PC-3 (cell line): ENCODE measurements at regions of chr10 and their contacts with region 1.

Region 1: DNA sequence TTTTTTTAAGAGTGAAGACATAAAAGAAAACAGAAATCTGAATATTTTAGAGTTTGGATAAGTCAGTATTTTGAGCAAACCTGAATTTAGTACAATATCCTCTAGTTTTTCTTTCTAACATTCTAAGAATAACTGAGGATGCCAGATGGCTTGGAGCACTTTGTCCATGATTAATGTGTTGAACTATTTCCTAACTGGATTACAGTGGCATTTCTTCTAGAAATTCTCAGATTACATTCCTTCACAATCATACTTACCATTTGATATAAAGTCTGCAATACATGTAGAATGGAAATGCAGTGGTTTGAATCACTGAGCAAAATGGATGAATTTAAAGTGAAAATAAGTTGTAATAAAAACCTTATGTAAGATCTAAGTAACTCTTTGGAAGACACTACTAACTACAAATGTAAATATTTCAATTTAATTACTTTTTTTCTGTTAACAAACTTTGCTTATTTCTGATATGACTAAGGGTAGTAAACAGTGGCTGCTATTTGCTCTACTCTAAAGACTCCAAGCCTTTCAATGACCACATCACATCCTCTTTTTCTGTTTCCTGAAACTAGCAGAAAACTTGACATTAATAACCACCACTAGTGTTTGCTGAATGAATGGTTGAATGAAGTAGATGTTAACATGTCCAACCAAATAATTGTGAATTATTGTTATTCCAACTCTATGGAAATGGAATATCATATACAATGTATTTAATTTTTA is 102.8 kb downstream of the PRKG1 start:
- DNase-seq: peak; percentile 72
- ATAC-seq: peak; percentile 95
- H3K4me3 ChIP-seq: no peak overlapping the region
- H3K27ac ChIP-seq: peak overlapping the region; percentile 9
- H3K4me1 ChIP-seq: peaks cover 14% of the 10 kb centered on the region
- H3K27me3 ChIP-seq: no peaks in the 10 kb centered on the region
- CTCF ChIP-seq: no peak

Region 2: DNA sequence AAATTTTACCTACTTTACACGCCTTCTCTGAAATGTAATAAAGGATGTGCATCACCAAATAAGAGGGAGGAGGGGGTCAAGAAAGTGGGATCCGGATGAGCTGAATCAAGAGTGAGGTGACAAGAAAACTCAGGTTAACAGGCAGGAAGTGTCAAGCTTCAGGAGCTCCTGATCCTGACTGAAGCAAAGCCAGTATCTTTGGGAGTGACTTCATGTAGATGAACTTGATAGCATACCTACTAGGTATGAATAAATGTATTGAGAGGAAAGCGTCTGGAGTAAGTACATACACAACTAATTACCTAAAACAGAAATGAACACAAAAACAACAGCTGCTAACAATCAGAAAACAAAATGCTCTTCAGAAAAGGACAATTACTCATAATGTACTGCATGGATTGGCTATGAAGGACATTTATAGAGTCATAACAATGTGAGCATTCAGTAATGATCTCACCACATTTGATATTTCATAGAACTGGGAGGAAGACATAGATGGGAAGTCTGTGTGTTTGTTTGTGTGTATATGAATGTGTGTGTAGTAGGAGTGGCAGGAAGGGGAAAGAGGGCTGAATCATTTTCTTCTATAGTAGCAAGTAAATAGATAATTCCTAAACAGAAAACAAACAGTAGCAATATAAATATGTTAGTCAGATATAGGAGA is 73.5 kb before region 1 on chr10:
- CTCF ChIA-PET with region 1: no interaction called
- POLR2A ChIA-PET with region 1: no interaction called
- intact Hi-C with region 1: loop called (anchors 1 kb)
- DNase-seq: peak; percentile 99
- ATAC-seq: peak; percentile 99
- H3K4me3 ChIP-seq: peak overlapping the region; percentile 26; the same call in 1 of the 2 replicates
- H3K27ac ChIP-seq: peak overlapping the region; percentile 73
- H3K4me1 ChIP-seq: peaks cover 30% of the 10 kb centered on the region
- H3K27me3 ChIP-seq: no peaks in the 10 kb centered on the region
- CTCF ChIP-seq: no peak

Region 3: GRCh38 chr10:51109801-51110533 is 67.2 kb before region 1 on chr10:
- CTCF ChIA-PET with region 1: no interaction called
- POLR2A ChIA-PET with region 1: no interaction called
- intact Hi-C with region 1: loop called (anchors 1 kb)
- DNase-seq: peak; percentile 99
- ATAC-seq: peak; percentile 90
- H3K4me3 ChIP-seq: peak overlapping the region; percentile 49
- H3K27ac ChIP-seq: peak overlapping the region; percentile 82
- H3K4me1 ChIP-seq: peaks cover 39% of the 10 kb centered on the region
- H3K27me3 ChIP-seq: no peaks in the 10 kb centered on the region
- CTCF ChIP-seq: no peak

Region 4: GRCh38 chr10:51196508-51197175 is 19.5 kb after region 1 on chr10:
- CTCF ChIA-PET with region 1: no interaction called
- POLR2A ChIA-PET with region 1: no interaction called
- intact Hi-C with region 1: loop called (anchors 1 kb)
- DNase-seq: peak; percentile 81
- ATAC-seq: peak; percentile 92
- H3K4me3 ChIP-seq: no peak overlapping the region
- H3K27ac ChIP-seq: no peak overlapping the region
- H3K4me1 ChIP-seq: peaks cover 21% of the 10 kb centered on the region
- H3K27me3 ChIP-seq: no peaks in the 10 kb centered on the region
- CTCF ChIP-seq: no peak

Region 5: GRCh38 chr10:51231754-51232153 is 54.6 kb after region 1 on chr10:
- CTCF ChIA-PET with region 1: no interaction called
- POLR2A ChIA-PET with region 1: no interaction called
- intact Hi-C with region 1: loop called (anchors 1 kb)
- DNase-seq: peak; percentile 94
- ATAC-seq: peak; percentile 78
- H3K4me3 ChIP-seq: no peak overlapping the region
- H3K27ac ChIP-seq: no peak overlapping the region
- H3K4me1 ChIP-seq: peaks cover 34% of the 10 kb centered on the region
- H3K27me3 ChIP-seq: no peaks in the 10 kb centered on the region
- CTCF ChIP-seq: no peak

Region 6: GRCh38 chr10:51389415-51390321 is 212.5 kb after region 1 on chr10:
- CTCF ChIA-PET with region 1: no interaction called
- POLR2A ChIA-PET with region 1: no interaction called
- intact Hi-C with region 1: loop called (anchors 2 kb)
- DNase-seq: peak; percentile 100
- ATAC-seq: peak; percentile 96
- H3K4me3 ChIP-seq: no peak overlapping the region
- H3K27ac ChIP-seq: peak overlapping the region; percentile 77
- H3K4me1 ChIP-seq: peaks cover 33% of the 10 kb centered on the region
- H3K27me3 ChIP-seq: no peaks in the 10 kb centered on the region
- CTCF ChIP-seq: peak; percentile 100